ENCODE measurements at regions of chr3 and their contacts with region 1.

Region 1: GRCh38 chr3:71583566-71584449 is at the start of gene FOXP1:
- DNase-seq: peak; percentile 84
- total RNA-seq, gene FOXP1: 53.2 TPM

Region 2: GRCh38 chr3:70716832-70717231 is 867.0 kb before region 1 on chr3:
- intact Hi-C with region 1: loop called (anchors 5 kb)
- DNase-seq: no peak

Region 3: GRCh38 chr3:71064288-71064955 is 519.4 kb before region 1 on chr3:
- intact Hi-C with region 1: loop called (anchors 2 kb)
- DNase-seq: no peak

Region 4: DNA sequence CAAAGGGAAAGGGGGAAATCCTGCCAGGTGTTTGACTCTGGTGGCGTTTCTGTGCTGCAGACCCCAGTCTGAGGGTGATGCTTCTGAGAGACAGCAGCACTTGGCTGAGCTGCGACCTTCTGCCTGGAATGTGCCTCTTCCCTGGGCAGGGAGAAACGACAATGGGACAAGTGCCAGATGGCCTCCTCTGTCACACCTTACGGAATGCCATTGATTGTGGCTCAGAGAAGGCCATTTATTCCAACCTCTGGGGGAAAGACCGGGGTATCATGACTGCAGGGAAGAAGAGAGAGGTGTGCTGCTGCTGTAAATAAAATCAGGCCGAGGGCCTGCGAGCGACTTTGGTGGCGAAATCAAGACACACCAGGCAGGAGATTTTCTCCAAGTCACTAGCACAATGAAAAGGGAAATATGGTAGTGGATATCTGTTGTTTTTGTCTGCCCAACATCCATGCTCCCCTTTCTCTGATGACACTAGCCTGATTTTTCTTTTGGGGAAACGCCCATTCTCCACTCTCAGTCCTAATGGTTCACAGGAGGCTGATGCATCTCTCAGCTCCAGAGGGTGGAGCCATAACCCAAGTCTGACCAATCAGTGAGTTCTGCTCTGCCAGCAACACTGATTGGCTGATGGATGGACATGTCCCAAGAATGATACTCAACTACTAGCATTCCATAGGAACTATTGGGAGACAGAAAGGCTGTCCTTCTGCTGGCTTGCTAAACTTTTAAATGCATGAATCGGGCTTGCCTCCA is 336.4 kb before region 1 on chr3:
- intact Hi-C with region 1: loop called (anchors 5 kb)
- DNase-seq: no peak

Region 5: DNA sequence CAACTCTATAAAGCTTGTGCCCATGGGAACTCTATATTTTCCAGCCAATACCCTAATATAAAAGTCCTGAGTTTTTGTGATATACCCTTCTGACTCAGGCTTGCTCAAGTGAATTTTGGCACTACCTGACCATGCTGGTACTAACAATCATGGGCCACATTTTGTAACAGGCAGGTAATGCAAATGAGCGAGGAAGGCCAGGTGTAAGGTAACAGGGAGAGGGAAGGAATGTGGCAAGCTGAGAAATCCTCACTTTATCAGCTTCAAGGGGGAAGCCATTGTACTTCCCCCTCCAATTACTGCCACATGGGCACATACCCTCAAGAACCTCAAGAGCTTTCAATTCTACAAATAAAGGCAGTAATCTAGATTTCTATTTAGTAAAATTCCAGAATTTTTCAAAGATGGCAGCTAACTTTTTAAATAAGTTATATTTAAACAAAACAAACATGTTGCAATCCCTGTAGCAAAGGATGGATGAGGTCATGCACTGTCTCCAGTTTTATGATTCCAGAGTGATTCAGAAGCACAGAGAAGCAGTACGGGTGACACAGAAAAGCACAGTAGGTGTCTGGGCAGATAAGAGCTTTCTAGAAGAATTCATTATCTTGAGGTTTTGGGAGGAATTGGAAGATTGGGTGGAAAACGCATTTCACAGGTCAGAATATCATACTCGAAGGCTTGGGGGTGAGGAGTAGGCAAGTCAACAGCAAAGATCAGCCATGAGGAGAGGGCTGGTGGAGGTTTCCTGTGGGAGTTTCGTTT is 87.9 kb before region 1 on chr3:
- intact Hi-C with region 1: loop called (anchors 5 kb)
- DNase-seq: no peak

Measured in cardiac septum (tissue), 1 donor.